ENCODE measurements at regions of chr11 and their contacts with region 1.

Region 1: DNA sequence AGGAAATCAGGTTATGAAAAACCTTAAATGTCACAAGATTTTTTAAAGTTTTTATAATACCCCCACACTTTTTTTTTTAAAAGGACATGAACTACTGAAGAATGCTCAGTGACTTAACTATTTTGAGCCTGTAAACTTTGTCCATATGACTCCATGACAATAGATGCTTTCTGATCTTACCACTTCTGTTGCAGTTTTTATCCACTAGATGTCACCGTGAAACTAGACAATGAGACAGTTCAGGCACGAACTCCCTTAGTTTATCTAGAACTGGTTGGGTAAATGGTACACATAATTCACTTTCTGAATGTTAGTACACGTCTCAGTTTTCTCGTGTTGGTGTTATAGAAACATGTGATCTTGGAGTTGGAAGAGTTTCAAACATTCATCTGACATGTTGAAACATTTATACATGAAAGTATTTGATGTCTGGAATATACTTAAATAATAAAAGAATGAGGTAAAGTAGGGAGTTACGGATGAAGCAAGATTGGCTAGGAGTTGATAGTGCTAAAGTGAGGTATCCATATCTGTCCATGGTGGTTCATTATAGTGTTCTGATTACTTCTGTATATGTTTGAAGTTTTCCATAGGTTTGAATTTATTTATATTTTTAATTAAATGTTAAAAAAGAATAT is 8.1 kb downstream of the CCDC15 start:
- DNase-seq: peak; percentile 82
- H3K4me3 Mint-ChIP-seq: no peak overlapping the region
- H3K27ac Mint-ChIP-seq: no peak overlapping the region
- H3K4me1 Mint-ChIP-seq: peaks cover 2% of the 10 kb centered on the region
- H3K27me3 Mint-ChIP-seq: no peaks in the 10 kb centered on the region

Region 2: GRCh38 chr11:124778281-124778680 is 183.8 kb before region 1 on chr11:
- intact Hi-C with region 1: no loop called
- DNase-seq: no peak
- H3K4me3 Mint-ChIP-seq: no peak overlapping the region
- H3K27ac Mint-ChIP-seq: no peak overlapping the region
- H3K4me1 Mint-ChIP-seq: peaks cover 10% of the 10 kb centered on the region
- H3K27me3 Mint-ChIP-seq: no peaks in the 10 kb centered on the region

Region 3: DNA sequence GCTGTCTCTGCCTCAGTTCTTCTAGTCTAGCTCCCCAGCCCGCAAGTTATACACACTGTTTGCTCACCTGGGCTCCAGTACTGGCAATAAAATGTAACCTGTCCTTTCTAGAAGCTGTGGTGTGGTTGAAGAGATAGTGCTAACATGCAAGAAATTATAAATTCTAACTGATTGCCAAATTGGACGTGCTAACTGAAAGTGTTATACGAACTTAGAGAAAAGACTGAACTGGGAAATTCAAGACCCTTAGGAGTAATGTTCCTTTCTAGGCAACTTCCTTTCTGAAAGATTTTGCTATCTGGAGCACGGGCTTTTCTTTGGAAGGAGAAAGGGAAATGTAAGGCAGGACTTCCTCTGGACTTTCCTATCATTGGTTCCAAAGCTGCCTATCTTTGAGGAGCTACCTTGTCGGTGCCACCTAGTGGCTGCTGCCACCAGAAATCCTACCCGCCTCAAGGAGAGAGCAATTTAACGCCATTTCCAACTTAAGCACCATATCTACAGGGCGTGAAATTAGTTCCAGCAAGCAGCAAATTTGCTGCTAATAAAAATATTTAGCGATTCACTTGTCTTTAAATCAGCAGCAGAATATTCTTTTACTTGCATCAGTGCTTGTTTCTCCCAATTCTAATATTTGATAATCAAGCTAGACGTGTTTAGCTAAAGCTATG is 162.0 kb after region 1 on chr11:
- intact Hi-C with region 1: loop called (anchors 1 kb)
- DNase-seq: peak; percentile 77
- H3K4me3 Mint-ChIP-seq: no peak overlapping the region
- H3K27ac Mint-ChIP-seq: no peak overlapping the region
- H3K4me1 Mint-ChIP-seq: peaks cover 2% of the 10 kb centered on the region
- H3K27me3 Mint-ChIP-seq: peaks cover 39% of the 10 kb centered on the region

Region 4: GRCh38 chr11:125141686-125142535 is 179.8 kb after region 1 on chr11:
- intact Hi-C with region 1: loop called (anchors 1 kb)
- DNase-seq: peak; percentile 87
- H3K4me3 Mint-ChIP-seq: no peak overlapping the region
- H3K27ac Mint-ChIP-seq: no peak overlapping the region
- H3K4me1 Mint-ChIP-seq: peaks cover 3% of the 10 kb centered on the region
- H3K27me3 Mint-ChIP-seq: peaks cover 38% of the 10 kb centered on the region

Region 5: GRCh38 chr11:125351033-125351867 is 389.2 kb after region 1 on chr11:
- intact Hi-C with region 1: loop called (anchors 2 kb)
- DNase-seq: no peak
- H3K4me3 Mint-ChIP-seq: no peak overlapping the region
- H3K27ac Mint-ChIP-seq: no peak overlapping the region
- H3K4me1 Mint-ChIP-seq: no peaks in the 10 kb centered on the region
- H3K27me3 Mint-ChIP-seq: peaks cover 3% of the 10 kb centered on the region